Activated CD4-positive, alpha-beta memory T cell treated with anti-CD3 and anti-CD28 coated beads for 36 hours (primary cell): ENCODE measurements at regions of chr17 and their contacts with region 1.

Region 1: GRCh38 chr17:81871387-81872230 is 472 bp upstream of the ARHGDIA start:
- DNase-seq: peak; percentile 96
- H3K4me3 Mint-ChIP-seq: peak overlapping the region; percentile 85
- H3K27ac Mint-ChIP-seq: peak overlapping the region; percentile 94
- H3K4me1 Mint-ChIP-seq: peaks cover 45% of the 10 kb centered on the region
- H3K27me3 Mint-ChIP-seq: no peaks in the 10 kb centered on the region

Region 2: GRCh38 chr17:81821603-81822311 is 49.9 kb before region 1 on chr17:
- CTCF ChIA-PET with region 1: no interaction called
- POLR2A ChIA-PET with region 1: no interaction called
- intact Hi-C with region 1: no loop called
- DNase-seq: peak; percentile 44
- H3K4me3 Mint-ChIP-seq: no peak overlapping the region
- H3K27ac Mint-ChIP-seq: no peak overlapping the region
- H3K4me1 Mint-ChIP-seq: peaks cover 4% of the 10 kb centered on the region
- H3K27me3 Mint-ChIP-seq: no peaks in the 10 kb centered on the region

Region 3: DNA sequence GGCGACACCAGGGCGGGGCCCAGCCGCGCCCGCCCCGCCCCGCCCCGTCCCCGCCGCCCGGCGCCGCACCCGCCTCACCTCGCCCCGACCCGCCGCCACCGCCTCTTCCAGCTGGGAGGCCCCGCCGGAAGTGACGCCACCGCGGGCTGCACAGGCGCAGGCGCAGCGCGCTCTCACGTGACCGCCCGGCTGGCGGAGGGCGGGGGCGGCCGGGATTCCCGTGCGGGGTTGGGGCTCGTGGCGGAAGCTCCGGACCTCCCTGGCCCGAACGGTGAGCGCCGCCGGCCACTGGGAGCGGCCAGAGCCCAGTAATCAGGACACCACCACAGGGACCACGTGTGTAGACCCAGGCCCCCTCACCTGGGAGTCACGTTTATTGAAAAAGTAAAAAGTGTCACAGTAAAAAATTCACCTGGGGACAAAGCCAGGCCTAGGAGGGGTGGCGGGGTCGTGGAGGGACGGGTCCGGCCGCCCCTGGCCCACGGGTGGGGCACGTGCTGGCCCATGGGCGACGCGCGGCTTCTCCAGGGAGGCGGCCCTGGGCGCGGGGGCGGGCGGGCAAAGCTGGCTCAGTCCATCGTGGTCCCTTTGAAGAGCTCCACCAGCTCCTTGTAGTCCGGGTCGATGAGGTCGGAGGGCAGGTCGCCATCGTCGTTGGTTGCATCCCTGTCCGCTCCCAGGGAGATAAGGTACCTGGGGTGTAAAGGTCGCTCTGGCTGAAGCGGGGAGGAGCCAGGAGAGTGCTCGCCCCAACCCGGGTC is 38.3 kb before region 1 on chr17 and contains the start of gene MCRIP1:
- CTCF ChIA-PET with region 1: interaction called, 3 read pairs
- POLR2A ChIA-PET with region 1: interaction called, 14 read pairs
- intact Hi-C with region 1: loop called (anchors 5 kb)
- DNase-seq: peak; percentile 97
- H3K4me3 Mint-ChIP-seq: peak within 1 kb of the TSS; percentile 97
- H3K27ac Mint-ChIP-seq: peak within 1 kb of the TSS; percentile 96
- H3K4me1 Mint-ChIP-seq: peaks cover 20% of the 10 kb centered on the region
- H3K27me3 Mint-ChIP-seq: no peaks in the 10 kb centered on the region
- total RNA-seq, gene MCRIP1: 67.4 to 68.3 TPM

Region 4: DNA sequence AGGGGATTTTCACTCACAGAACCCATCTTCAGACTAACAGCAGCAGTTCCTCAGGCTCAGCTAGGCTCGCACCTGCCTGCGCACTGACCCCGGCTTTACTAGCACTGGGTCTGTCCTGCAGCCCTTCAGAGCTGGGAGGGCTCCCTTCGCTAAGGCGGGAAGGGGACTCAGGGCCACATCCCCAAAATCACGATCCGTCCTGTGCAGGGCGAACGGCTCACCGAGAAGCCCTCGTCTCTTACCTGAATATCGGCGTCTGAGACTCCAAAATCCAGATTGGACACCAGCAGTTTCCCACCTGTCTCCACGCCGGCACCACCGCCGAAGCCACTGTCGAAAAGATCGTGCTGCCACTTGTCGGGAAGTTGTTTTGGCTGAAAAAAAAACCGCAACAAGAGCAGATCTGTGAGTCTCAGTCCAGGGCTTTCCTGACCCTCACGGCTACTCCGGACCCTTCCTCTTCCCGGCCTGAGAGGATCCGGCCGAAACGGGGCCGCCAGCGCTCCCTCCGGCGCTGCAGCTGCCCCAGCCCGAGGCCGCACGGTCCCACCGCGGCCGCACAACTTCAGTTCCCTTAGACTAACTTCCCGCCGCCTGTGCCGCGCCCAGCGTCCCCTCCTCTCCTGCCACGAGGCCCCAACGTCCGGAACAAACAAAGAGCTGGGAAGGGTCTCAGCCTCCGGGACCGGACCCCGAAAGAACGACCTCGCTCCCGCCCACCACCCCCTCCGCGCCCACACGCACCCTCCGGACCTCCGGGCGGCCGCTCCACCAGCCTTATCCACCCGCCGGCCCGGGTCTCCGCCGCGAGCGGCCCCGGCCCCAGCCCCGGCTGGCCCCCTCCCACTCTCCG is 19.1 kb after region 1 on chr17:
- CTCF ChIA-PET with region 1: interaction called, 4 read pairs
- POLR2A ChIA-PET with region 1: interaction called, 16 read pairs
- intact Hi-C with region 1: loop called (anchors 1 kb)
- DNase-seq: peak; percentile 41
- H3K4me3 Mint-ChIP-seq: peak overlapping the region; percentile 85
- H3K27ac Mint-ChIP-seq: peak overlapping the region; percentile 89
- H3K4me1 Mint-ChIP-seq: peaks cover 26% of the 10 kb centered on the region
- H3K27me3 Mint-ChIP-seq: no peaks in the 10 kb centered on the region

Region 5: DNA sequence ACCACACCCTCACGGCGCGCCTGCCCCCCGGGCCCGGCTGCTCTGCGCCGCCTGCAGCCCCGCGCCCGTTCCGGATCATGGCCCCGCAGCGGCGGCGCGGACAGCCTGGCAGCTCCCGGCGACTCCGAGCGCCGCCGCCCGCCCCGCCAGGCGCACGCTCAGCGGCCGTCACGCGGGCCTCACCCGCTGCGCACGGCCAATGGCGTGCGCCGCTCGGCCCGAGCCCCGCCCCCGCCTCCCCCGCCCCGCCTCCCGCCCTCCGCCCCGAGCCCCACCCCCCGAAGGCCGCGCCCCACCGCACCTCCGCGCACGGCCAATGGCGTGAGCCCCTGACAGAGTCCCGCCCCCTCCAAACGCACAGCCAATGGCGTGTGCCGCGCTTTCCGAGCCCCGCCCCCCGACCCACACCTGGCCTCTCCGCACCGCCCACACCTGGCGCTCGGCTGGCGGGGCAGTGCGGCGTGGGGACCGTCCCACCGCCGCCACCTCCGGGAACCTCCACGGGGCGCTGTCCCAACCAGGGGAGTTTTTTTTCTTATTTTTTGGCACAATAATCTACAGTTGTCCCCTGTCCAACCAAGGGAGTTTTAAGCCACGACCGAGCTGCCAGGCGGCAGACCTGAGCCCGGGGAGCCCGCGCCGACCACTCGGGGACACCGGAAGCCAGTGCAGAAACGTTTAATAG is 39.8 kb after region 1 on chr17 and contains the start of gene PCYT2:
- CTCF ChIA-PET with region 1: interaction called, 4 read pairs
- POLR2A ChIA-PET with region 1: no interaction called
- intact Hi-C with region 1: loop called (anchors 5 kb)
- DNase-seq: peak; percentile 95
- H3K4me3 Mint-ChIP-seq: peak within 1 kb of the TSS; percentile 85
- H3K27ac Mint-ChIP-seq: no peak within 1 kb of the TSS
- H3K4me1 Mint-ChIP-seq: peaks cover 11% of the 10 kb centered on the region
- H3K27me3 Mint-ChIP-seq: no peaks in the 10 kb centered on the region
- total RNA-seq, gene PCYT2: 28.8 to 29.7 TPM

Region 6: GRCh38 chr17:81927653-81928543 is 56.3 kb after region 1 on chr17 and contains the start of gene MAFG:
- CTCF ChIA-PET with region 1: interaction called, 5 read pairs
- POLR2A ChIA-PET with region 1: interaction called, 3 read pairs
- intact Hi-C with region 1: loop called (anchors 5 kb)
- DNase-seq: peak; percentile 92
- H3K4me3 Mint-ChIP-seq: peak within 1 kb of the TSS; percentile 83
- H3K27ac Mint-ChIP-seq: peak within 1 kb of the TSS; percentile 87
- H3K4me1 Mint-ChIP-seq: peaks cover 15% of the 10 kb centered on the region
- H3K27me3 Mint-ChIP-seq: peaks cover 11% of the 10 kb centered on the region
- total RNA-seq, gene MAFG: 23.4 to 24.1 TPM

Region 7: DNA sequence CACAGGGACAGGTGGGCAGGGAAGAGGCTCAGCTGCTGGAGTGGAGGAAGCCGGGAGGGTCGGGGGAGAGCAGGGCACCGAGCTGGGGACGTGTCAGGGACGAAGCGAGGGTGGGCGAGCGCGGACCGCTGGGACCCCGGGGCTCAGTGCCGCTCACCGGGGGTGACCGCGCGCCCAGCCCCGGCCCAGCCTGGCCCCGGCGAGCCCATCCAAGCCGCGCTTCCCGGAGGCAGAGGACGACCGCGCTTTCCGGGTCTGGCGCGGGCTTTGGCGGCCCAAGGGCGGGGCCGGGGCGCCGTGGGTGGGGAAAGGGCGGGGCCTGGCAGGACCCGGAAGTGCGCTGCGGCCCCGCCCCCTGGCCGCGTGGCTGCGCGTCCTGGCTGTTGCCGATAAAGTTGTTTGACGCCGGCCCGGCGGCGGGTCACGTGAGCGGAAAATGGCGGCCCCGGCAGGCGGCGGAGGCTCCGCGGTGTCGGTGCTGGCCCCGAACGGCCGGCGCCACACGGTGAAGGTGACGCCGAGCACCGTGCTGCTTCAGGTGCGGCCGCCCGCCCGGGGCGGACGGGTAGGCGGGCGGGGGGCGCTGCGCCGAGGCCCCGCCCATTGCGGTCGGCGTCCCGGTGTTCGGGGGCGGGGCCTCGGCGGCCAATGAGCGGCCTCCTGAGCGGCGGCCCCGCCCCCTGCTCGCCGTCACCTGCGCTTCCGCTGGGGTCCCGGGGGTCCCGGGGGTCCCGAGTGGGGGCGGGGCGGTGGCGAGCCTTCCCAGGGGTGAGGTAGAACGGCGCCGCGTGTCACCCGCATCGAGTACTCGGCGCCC is 105.8 kb after region 1 on chr17 and contains the start of gene ASPSCR1:
- CTCF ChIA-PET with region 1: no interaction called
- POLR2A ChIA-PET with region 1: no interaction called
- intact Hi-C with region 1: loop called (anchors 5 kb)
- DNase-seq: peak; percentile 91
- H3K4me3 Mint-ChIP-seq: peak within 1 kb of the TSS; percentile 92
- H3K27ac Mint-ChIP-seq: peak within 1 kb of the TSS; percentile 92
- H3K4me1 Mint-ChIP-seq: peaks cover 33% of the 10 kb centered on the region
- H3K27me3 Mint-ChIP-seq: no peaks in the 10 kb centered on the region
- total RNA-seq, gene ASPSCR1: 25.4 to 27.1 TPM